ENCODE measurements at regions of chr15 and their contacts with region 1.

Region 1: GRCh38 chr15:64067564-64068030 is 21.3 kb upstream of the DAPK2 start:
- DNase-seq: peak; percentile 44 to 74 (median 63)
- ATAC-seq: peak; percentile 89
- H3K4me3 ChIP-seq: no peak overlapping the region
- H3K4me3 Mint-ChIP-seq: peak overlapping the region in 1 of 10 donors; percentile 33
- H3K27ac ChIP-seq: no peak overlapping the region
- H3K27ac Mint-ChIP-seq: peak overlapping the region in 2 of 9 donors; percentile 19 to 36
- H3K4me1 ChIP-seq: peaks cover 0 to 3% of the 10 kb centered on the region in 2 donors
- H3K4me1 Mint-ChIP-seq: peaks cover 0 to 15% (median 4%) of the 10 kb centered on the region in 7 donors
- H3K27me3 ChIP-seq: no peaks in the 10 kb centered on the region
- H3K27me3 Mint-ChIP-seq: no peaks in the 10 kb centered on the region

Region 2: DNA sequence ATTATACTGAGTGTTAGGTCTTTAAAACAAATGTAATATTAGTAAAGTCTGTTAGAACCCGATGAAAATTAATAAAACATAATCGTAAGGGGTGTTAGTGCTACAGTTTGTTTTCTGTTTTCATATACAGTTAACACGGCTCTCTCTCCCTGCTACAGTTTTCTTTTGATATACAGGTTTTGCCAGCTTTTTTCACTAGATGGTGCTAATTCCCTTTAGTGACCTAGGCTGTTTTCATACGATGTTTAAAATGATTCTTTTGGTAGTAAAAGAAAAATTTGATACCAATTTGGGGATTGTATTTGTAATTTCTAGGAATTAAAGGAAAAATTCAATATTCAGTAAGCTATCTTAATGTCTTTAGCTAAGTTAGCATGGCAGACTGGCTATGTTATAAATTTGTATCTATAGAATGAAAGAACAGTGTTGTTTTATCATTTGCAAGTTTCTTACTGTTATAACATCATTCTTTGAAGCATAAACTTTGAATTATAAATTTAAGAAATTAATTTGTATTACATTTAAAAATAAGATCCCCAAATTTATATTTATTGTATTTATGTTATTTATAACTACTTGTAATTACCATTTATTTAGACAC is 778.7 kb before region 1 on chr15:
- CTCF ChIA-PET with region 1: interaction called, 3 read pairs
- POLR2A ChIA-PET with region 1: no interaction called
- intact Hi-C with region 1: loop called (anchors 1 to 2 kb)
- DNase-seq: peak in 7 of 9 donors; percentile 30 to 68 (median 52)
- ATAC-seq: peak; percentile 79
- H3K4me3 ChIP-seq: no peak overlapping the region
- H3K4me3 Mint-ChIP-seq: peak overlapping the region in 1 of 10 donors; percentile 6
- H3K27ac ChIP-seq: no peak overlapping the region
- H3K27ac Mint-ChIP-seq: peak overlapping the region in 4 of 9 donors; percentile 12 to 64 (median 59)
- H3K4me1 ChIP-seq: no peaks in the 10 kb centered on the region
- H3K4me1 Mint-ChIP-seq: peaks cover 5 to 10% (median 7%) of the 10 kb centered on the region in 7 donors
- H3K27me3 ChIP-seq: no peaks in the 10 kb centered on the region
- H3K27me3 Mint-ChIP-seq: no peaks in the 10 kb centered on the region

Region 3: DNA sequence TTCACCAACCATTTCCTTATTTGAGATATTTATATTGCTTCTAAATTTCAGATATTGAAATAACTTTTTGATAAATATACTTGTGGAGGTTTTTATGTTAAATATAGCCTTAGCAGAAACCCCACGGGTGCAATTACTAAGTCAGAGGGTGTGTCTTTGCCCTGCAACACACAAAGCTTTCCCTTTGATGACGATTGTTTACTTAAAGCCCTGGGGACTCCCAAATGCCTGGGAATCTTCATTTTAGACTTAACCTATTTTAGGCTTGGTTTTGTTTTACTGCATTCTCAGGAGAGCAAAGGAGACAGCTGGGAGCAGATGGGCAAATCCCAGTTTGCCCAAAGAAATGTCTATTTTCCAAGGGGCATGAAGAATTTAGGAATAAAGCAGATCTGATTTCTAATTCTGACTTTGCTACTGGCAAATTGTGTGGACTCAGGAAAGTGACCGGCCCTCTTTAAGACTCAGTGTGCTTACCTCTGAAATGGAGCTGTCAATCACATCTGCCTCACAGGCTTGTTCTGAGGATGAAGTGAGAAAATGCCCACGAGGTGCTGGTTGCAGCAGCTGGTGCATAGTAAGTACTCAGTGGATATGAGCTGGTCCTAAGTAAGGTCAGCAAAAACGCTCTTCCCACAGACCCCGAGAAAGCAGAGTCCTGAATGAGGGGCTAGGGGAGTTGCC is 636.7 kb before region 1 on chr15:
- CTCF ChIA-PET with region 1: no interaction called
- POLR2A ChIA-PET with region 1: no interaction called
- intact Hi-C with region 1: no loop called
- DNase-seq: no peak
- ATAC-seq: no peak
- H3K4me3 ChIP-seq: no peak overlapping the region
- H3K4me3 Mint-ChIP-seq: no peak overlapping the region
- H3K27ac ChIP-seq: no peak overlapping the region
- H3K27ac Mint-ChIP-seq: no peak overlapping the region
- H3K4me1 ChIP-seq: no peaks in the 10 kb centered on the region
- H3K4me1 Mint-ChIP-seq: peaks cover 0 to 20% (median 11%) of the 10 kb centered on the region in 7 donors
- H3K27me3 ChIP-seq: no peaks in the 10 kb centered on the region
- H3K27me3 Mint-ChIP-seq: no peaks in the 10 kb centered on the region

Region 4: DNA sequence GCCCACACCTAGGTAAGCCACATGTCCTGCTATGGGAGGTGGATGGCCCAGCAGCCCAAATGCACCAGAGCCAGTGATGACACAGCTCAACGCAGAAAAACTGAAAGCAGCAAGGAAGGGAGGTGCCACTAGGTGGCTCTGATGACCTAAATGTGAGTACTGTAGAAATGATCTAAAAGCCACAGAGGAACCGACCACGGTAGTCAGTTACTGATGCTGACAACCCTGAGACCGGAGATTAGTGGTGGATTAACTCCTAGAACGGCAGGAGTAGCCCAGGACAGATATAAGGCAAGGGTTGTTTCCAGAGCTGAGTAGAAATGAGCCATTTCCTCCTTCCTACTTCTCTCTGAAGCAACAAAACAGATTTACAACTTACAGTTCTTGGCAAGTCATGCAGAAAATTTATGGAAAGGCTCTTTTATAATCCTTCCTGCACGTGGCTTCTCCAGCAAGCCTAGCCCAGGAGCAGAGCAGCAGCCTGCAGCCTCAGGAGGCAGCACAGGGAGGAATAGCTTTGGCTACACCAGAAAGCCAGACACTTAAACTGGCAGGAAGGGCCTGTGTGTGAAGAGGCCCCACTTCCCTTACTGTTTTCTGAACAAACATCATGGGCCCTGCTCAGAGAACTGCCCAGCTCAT is 457.3 kb before region 1 on chr15:
- CTCF ChIA-PET with region 1: interaction called, 16 read pairs
- POLR2A ChIA-PET with region 1: interaction called, 3 read pairs
- intact Hi-C with region 1: loop called (anchors 1 kb)
- DNase-seq: peak in 8 of 9 donors; percentile 43 to 71 (median 64)
- ATAC-seq: peak; percentile 94
- H3K4me3 ChIP-seq: no peak overlapping the region
- H3K4me3 Mint-ChIP-seq: peak overlapping the region in 7 of 10 donors; percentile 9 to 68 (median 42)
- H3K27ac ChIP-seq: peak overlapping the region; percentile 69
- H3K27ac Mint-ChIP-seq: peak overlapping the region; percentile 74 to 94 (median 84)
- H3K4me1 ChIP-seq: peaks cover 23 to 25% of the 10 kb centered on the region in 2 donors
- H3K4me1 Mint-ChIP-seq: peaks cover 23 to 51% (median 41%) of the 10 kb centered on the region in 7 donors
- H3K27me3 ChIP-seq: no peaks in the 10 kb centered on the region
- H3K27me3 Mint-ChIP-seq: no peaks in the 10 kb centered on the region

Region 5: GRCh38 chr15:63826528-63826927 is 241.1 kb before region 1 on chr15:
- CTCF ChIA-PET with region 1: interaction called, 4 read pairs
- POLR2A ChIA-PET with region 1: no interaction called
- intact Hi-C with region 1: loop called (anchors 1 to 2 kb)
- DNase-seq: peak in 3 of 9 donors; percentile 36 to 44 (median 37)
- ATAC-seq: peak; percentile 26
- H3K4me3 ChIP-seq: no peak overlapping the region
- H3K4me3 Mint-ChIP-seq: peak overlapping the region in 8 of 10 donors; percentile 3 to 53 (median 34)
- H3K27ac ChIP-seq: no peak overlapping the region
- H3K27ac Mint-ChIP-seq: peak overlapping the region in 7 of 9 donors; percentile 36 to 98 (median 58)
- H3K4me1 ChIP-seq: peaks cover 21 to 31% of the 10 kb centered on the region in 2 donors
- H3K4me1 Mint-ChIP-seq: peaks cover 67 to 94% (median 85%) of the 10 kb centered on the region in 7 donors
- H3K27me3 ChIP-seq: no peaks in the 10 kb centered on the region
- H3K27me3 Mint-ChIP-seq: no peaks in the 10 kb centered on the region

Region 6: DNA sequence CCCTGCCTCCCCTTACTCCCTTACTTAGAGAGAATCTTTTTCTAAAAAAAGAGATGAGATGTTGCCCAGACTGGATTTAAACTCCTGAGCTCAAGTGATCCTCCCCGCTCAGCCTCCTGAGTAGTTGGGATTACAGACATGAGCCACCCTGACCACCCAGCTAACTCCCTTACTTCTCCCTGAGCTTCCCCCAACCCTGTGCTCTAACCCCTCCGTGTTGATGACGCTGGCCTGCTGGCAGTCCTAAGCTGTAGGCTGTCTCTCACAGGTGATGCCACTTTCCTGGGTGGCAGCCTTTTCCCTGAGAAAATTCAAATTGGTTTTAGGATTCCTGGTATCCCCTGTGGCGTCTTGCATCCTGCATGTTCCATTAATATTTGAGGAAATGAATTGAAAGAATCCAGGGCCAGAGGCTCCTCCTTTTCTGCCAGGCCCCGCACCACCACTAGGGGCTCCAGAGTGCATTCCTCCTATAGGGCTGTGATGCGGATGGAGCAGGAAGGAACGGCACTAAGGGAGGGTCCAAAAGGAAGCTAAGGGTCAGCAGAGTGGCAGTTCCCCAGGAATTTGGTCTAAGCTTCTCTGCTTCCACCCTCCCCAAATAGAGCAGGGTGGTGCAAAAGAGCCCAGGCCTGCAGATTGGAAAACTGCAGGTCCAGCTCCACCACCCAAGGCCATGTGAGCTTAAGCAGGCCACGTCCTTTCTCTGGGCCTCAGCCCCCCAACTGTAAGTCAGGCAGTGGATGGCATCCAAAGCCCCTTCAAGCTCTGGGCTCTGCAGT is 122.4 kb before region 1 on chr15:
- CTCF ChIA-PET with region 1: interaction called, 3 read pairs
- POLR2A ChIA-PET with region 1: no interaction called
- intact Hi-C with region 1: loop called in 1 of 2 experiments (anchors 1 kb)
- DNase-seq: peak; percentile 21 to 68 (median 48)
- ATAC-seq: peak; percentile 94
- H3K4me3 ChIP-seq: no peak overlapping the region
- H3K4me3 Mint-ChIP-seq: no peak overlapping the region
- H3K27ac ChIP-seq: no peak overlapping the region
- H3K27ac Mint-ChIP-seq: peak overlapping the region in 5 of 9 donors; percentile 5 to 75 (median 15)
- H3K4me1 ChIP-seq: peaks cover 0 to 6% of the 10 kb centered on the region in 2 donors
- H3K4me1 Mint-ChIP-seq: peaks cover 1 to 33% (median 6%) of the 10 kb centered on the region in 7 donors
- H3K27me3 ChIP-seq: no peaks in the 10 kb centered on the region
- H3K27me3 Mint-ChIP-seq: no peaks in the 10 kb centered on the region

Region 7: GRCh38 chr15:64792282-64792681 is 724.7 kb after region 1 on chr15:
- CTCF ChIA-PET with region 1: no interaction called
- POLR2A ChIA-PET with region 1: no interaction called
- intact Hi-C with region 1: no loop called
- DNase-seq: no peak
- ATAC-seq: no peak
- H3K4me3 ChIP-seq: no peak overlapping the region
- H3K4me3 Mint-ChIP-seq: no peak overlapping the region
- H3K27ac ChIP-seq: no peak overlapping the region
- H3K27ac Mint-ChIP-seq: no peak overlapping the region
- H3K4me1 ChIP-seq: no peaks in the 10 kb centered on the region
- H3K4me1 Mint-ChIP-seq: no peaks in the 10 kb centered on the region
- H3K27me3 ChIP-seq: no peaks in the 10 kb centered on the region
- H3K27me3 Mint-ChIP-seq: no peaks in the 10 kb centered on the region